A549 (cell line): ENCODE measurements at regions of chrX and their contacts with region 1.

Region 1: GRCh38 chrX:19121898-19122640 is at the start of gene ADGRG2:
- DNase-seq: peak; percentile 37 to 55
- ATAC-seq: peak; percentile 94 to 96
- H3K4me3 ChIP-seq: peak within 1 kb of the TSS; percentile 77
- H3K27ac ChIP-seq: peak within 1 kb of the TSS; percentile 93 to 96
- H3K4me1 ChIP-seq: peaks cover 4% of the 10 kb centered on the region; the same call in 2 of the 3 replicates
- CTCF ChIP-seq: peak; percentile 43
- EP300 ChIP-seq: no peak
- POLR2A ChIP-seq: peak; percentile 8; the same call in 1 of the 2 replicates
- RAD21 ChIP-seq: peak; percentile 71 to 83
- polyA plus RNA-seq, gene ADGRG2: 8.5 and 10.3 TPM in 2 replicates

Region 2: GRCh38 chrX:18994738-18995137 is 127.3 kb before region 1 on chrX:
- CTCF ChIA-PET with region 1: interaction called, 10 read pairs
- POLR2A ChIA-PET with region 1: no interaction called
- DNase-seq: peak; percentile 13 to 70
- ATAC-seq: peak; percentile 89 to 94
- H3K4me3 ChIP-seq: peak overlapping the region; percentile 12; the same call in 1 of the 3 replicates
- H3K27ac ChIP-seq: peak overlapping the region; percentile 80
- H3K4me1 ChIP-seq: peaks cover 72% of the 10 kb centered on the region
- CTCF ChIP-seq: no peak
- EP300 ChIP-seq: peak; percentile 28 to 43; a peak in 1 of 5 replicates
- POLR2A ChIP-seq: no peak
- RAD21 ChIP-seq: no peak

Region 3: GRCh38 chrX:19017271-19017670 is 104.8 kb before region 1 on chrX:
- CTCF ChIA-PET with region 1: interaction called, 34 read pairs
- POLR2A ChIA-PET with region 1: no interaction called
- DNase-seq: peak; percentile 55 to 61
- ATAC-seq: peak; percentile 83 to 93; a peak in 5 of 6 replicates
- H3K4me3 ChIP-seq: no peak overlapping the region
- H3K27ac ChIP-seq: peak overlapping the region in 1 of 2 experiments; percentile 41; a peak in 1 of 6 replicates
- H3K4me1 ChIP-seq: peaks cover 5% of the 10 kb centered on the region; the same call in 1 of the 3 replicates
- CTCF ChIP-seq: peak; percentile 80
- EP300 ChIP-seq: no peak
- POLR2A ChIP-seq: no peak
- RAD21 ChIP-seq: peak; percentile 88 to 90

Region 4: DNA sequence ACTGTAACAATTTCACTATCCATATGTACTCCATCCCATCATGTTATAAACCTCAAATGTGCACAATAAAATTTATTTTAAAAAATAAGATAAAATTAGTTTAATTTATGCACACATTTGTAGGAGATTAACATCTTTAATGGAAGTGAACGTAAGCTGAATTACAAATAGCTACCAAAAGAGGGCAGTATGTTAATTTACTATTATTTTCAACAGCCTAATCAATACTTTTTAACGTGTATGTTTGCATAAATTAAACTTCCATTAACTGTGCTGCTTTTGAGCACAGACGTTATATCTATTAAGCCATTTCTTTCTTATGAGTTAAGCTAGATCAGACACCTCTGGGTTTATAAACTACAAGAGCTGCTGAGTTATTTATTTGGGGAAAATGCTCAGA is 81.7 kb before region 1 on chrX:
- CTCF ChIA-PET with region 1: interaction called, 28 read pairs
- POLR2A ChIA-PET with region 1: no interaction called
- DNase-seq: no peak
- ATAC-seq: no peak
- H3K4me3 ChIP-seq: no peak overlapping the region
- H3K27ac ChIP-seq: no peak overlapping the region
- H3K4me1 ChIP-seq: peaks cover 2% of the 10 kb centered on the region
- CTCF ChIP-seq: peak; percentile 63
- EP300 ChIP-seq: no peak
- POLR2A ChIP-seq: no peak
- RAD21 ChIP-seq: peak; percentile 62 to 73

Region 5: GRCh38 chrX:19046343-19047215 is 75.5 kb before region 1 on chrX:
- CTCF ChIA-PET with region 1: interaction called, 20 read pairs
- POLR2A ChIA-PET with region 1: no interaction called
- DNase-seq: peak; percentile 86 to 90
- ATAC-seq: peak; percentile 95 to 97
- H3K4me3 ChIP-seq: peak overlapping the region; percentile 25; the same call in 1 of the 3 replicates
- H3K27ac ChIP-seq: peak overlapping the region; percentile 88 to 96
- H3K4me1 ChIP-seq: peaks cover 24% of the 10 kb centered on the region
- CTCF ChIP-seq: no peak
- EP300 ChIP-seq: peak; percentile 73 to 81; a peak in 2 of 5 replicates
- POLR2A ChIP-seq: no peak
- RAD21 ChIP-seq: peak in 1 of 2 experiments; percentile 15; a peak in 1 of 5 replicates

Region 6: DNA sequence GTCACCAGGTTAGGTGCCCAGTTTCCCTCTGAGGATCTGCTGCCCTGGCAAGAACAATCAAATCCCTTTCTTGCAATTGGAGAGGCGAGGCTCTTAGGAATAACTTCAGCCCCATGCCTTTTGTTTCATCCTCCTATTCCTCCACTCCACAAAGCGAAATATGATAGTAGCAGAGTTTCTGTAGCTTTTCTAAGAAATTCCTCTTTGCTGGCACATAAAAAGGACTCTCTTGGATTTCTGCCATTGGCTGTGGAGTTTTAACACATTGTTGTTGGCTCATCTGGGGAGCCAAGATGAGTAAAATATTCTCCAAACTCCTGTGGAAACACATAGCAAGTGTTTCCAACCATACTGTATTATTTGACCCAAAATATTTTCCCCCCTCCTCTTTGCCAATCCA is 11.2 kb after region 1 on chrX:
- CTCF ChIA-PET with region 1: interaction called, 13 read pairs
- POLR2A ChIA-PET with region 1: no interaction called
- DNase-seq: no peak
- ATAC-seq: no peak
- H3K4me3 ChIP-seq: no peak overlapping the region
- H3K27ac ChIP-seq: no peak overlapping the region; a peak in 1 of 6 replicates
- H3K4me1 ChIP-seq: peaks cover 13% of the 10 kb centered on the region; the same call in 2 of the 3 replicates
- CTCF ChIP-seq: no peak
- EP300 ChIP-seq: no peak
- POLR2A ChIP-seq: no peak
- RAD21 ChIP-seq: no peak

Region 7: DNA sequence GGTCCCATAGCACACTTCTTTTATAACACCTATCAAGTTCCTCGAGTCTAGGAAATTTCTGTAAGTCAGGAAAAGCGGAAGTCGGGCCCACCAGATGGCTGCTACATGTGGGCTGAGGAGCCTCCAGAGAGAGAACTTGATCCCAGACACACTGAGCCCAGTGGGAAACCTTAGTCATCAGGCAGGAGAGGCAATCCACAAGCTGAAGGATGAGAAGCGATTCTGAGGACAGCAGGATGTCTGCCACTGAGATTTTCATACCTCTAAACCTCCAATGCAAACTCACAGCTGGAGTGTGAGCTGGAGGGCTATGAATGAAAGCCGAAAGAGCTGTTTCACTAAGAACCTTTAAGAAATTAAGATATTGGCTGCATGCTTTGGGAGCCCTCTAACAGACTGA is 169.0 kb after region 1 on chrX:
- CTCF ChIA-PET with region 1: no interaction called
- POLR2A ChIA-PET with region 1: no interaction called
- DNase-seq: no peak
- ATAC-seq: no peak
- H3K4me3 ChIP-seq: no peak overlapping the region
- H3K27ac ChIP-seq: no peak overlapping the region
- H3K4me1 ChIP-seq: no peaks in the 10 kb centered on the region
- CTCF ChIP-seq: no peak
- EP300 ChIP-seq: no peak
- POLR2A ChIP-seq: no peak
- RAD21 ChIP-seq: no peak

Region 8: DNA sequence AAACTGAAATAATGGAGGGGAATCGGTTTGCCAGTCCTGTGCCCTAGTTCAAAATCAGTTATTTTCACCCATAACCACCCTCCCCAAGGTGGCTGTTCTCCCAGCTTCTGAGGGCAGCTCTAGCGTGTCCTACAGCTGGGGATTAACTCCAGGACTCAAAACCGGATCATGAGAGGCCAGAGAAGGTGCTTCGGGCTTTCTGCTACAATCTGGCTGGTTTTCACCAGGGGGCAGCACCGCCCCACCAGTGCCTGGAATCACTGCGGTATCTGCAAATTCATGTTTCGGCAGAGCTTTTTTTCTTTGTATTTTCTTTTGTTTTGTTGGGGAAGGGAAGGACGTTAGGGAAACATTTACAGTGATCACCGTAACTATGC is 250.1 kb after region 1 on chrX:
- CTCF ChIA-PET with region 1: no interaction called
- POLR2A ChIA-PET with region 1: no interaction called
- DNase-seq: peak; percentile 61 to 67
- ATAC-seq: peak; percentile 87
- H3K4me3 ChIP-seq: no peak overlapping the region
- H3K27ac ChIP-seq: 0 out of 6 replicates have a peak overlapping the region, but pooled peaks of 1 of the 2 experiments have one; percentile 39
- H3K4me1 ChIP-seq: no peaks in the 10 kb centered on the region
- CTCF ChIP-seq: peak; percentile 72
- EP300 ChIP-seq: no peak
- POLR2A ChIP-seq: no peak
- RAD21 ChIP-seq: peak; percentile 80 to 87